ENCODE measurements at regions of chr12 and their contacts with region 1.

Region 1: GRCh38 chr12:116599285-116600136 is 40.3 kb downstream of the MAP1LC3B2 start:
- DNase-seq: peak; percentile 24 to 92
- H3K4me3 ChIP-seq: peak overlapping the region; percentile 43 to 59
- H3K27ac ChIP-seq: peak overlapping the region; percentile 73 to 79
- H3K4me1 ChIP-seq: peaks cover 4 to 22% of the 10 kb centered on the region in 2 donors
- H3K27me3 ChIP-seq: no peaks in the 10 kb centered on the region
- CTCF ChIP-seq: peak; percentile 22 to 86 (median 74)

Region 2: GRCh38 chr12:116015525-116015924 is 584.0 kb before region 1 on chr12:
- intact Hi-C with region 1: loop called (anchors 5 kb)
- DNase-seq: no peak
- H3K4me3 ChIP-seq: no peak overlapping the region
- H3K27ac ChIP-seq: no peak overlapping the region
- H3K4me1 ChIP-seq: peaks cover 0 to 3% of the 10 kb centered on the region in 2 donors
- H3K27me3 ChIP-seq: no peaks in the 10 kb centered on the region
- CTCF ChIP-seq: peak; percentile 42 to 65 (median 45)

Region 3: DNA sequence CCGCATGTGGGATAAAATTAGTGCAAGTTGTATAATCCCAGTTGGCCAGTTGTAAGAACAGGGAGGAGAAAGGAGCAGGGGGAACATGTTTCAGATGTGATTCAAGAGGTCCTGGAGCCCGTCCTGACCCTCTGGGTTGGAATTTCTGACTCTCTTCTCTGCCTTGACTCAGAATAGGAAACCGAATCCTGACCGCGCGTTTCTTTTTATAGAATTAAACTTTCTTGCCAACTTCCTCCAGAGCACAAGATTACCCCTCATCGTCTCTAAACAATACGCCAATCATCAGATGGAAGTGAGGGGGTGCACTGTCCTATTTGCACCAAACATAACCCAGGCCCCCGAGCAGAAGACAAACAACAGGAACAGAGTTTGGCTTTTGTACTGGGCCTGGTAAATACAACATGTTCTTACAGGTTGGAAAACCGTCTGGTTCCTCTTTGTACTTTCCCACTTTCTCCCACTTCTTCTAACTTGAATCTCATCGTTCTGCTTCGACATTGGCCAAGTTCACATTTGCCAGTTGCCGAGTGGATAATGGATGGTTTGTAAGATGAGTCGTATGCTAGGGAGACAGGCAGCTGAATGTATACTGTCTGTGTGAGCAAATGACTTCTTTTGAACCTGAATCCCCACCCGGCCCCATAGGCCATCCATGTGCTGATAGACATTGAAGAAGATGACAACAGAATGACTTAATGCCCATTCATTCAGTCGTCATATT is 279.5 kb before region 1 on chr12:
- intact Hi-C with region 1: loop called (anchors 2 kb)
- DNase-seq: peak; percentile 53 to 95
- H3K4me3 ChIP-seq: peak overlapping the region; percentile 17 to 24
- H3K27ac ChIP-seq: peak overlapping the region; percentile 87 to 89
- H3K4me1 ChIP-seq: peaks cover 11 to 25% of the 10 kb centered on the region in 2 donors
- H3K27me3 ChIP-seq: no peaks in the 10 kb centered on the region
- CTCF ChIP-seq: no peak

Region 4: DNA sequence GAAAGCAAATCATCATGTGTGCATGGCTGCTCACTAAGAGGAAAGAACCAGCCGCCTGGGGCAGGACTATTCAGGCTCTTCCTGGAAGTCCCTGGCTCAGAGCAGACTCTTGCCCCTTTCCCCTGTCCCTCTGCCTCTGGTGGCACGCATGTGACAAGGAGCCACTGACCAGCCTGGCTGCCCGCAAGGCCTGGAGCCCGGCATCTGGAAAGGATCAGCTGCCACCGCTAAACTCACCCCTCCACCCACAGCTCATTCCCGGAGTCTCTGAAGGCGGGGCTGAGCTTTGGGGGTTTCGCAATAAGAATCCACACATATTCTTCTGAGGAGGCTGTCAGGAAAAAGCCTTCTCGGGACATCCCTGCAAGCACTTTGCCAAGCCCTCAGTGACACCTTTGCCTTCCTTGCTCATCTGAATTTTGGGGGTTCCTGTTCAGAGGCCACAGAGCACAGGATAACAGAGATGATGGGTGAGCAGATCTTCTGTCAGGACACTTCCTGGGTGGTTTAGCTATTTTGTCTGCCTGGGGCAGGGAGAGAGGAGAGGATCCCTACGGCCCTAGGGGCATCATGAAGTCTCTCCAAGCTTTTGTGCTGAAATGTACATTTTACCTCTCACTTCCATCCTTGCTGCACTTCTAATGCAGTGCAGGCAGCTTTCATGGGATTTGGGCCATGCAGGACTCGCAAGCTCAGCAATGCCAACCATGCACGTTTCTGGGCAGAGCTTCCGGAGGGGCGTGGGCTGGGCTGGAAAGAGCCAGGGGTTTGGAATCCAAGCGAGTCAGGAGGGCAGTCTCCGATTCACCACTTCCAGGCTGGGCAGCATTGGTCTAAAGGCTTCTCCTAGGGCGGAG is 165.1 kb before region 1 on chr12:
- intact Hi-C with region 1: loop called (anchors 5 kb)
- DNase-seq: peak; percentile 83 to 97
- H3K4me3 ChIP-seq: peak overlapping the region; percentile 24 to 56
- H3K27ac ChIP-seq: peak overlapping the region; percentile 67 to 74
- H3K4me1 ChIP-seq: peaks cover 4 to 12% of the 10 kb centered on the region in 2 donors
- H3K27me3 ChIP-seq: no peaks in the 10 kb centered on the region
- CTCF ChIP-seq: no peak

Region 5: GRCh38 chr12:116474331-116474730 is 125.2 kb before region 1 on chr12:
- intact Hi-C with region 1: no loop called
- DNase-seq: no peak
- H3K4me3 ChIP-seq: no peak overlapping the region
- H3K27ac ChIP-seq: no peak overlapping the region
- H3K4me1 ChIP-seq: no peaks in the 10 kb centered on the region
- H3K27me3 ChIP-seq: no peaks in the 10 kb centered on the region
- CTCF ChIP-seq: no peak

Region 6: GRCh38 chr12:116533343-116534251 is 65.9 kb before region 1 on chr12:
- intact Hi-C with region 1: loop called (anchors 2 kb)
- DNase-seq: peak; percentile 30 to 85
- H3K4me3 ChIP-seq: peak overlapping the region; percentile 61 to 84
- H3K27ac ChIP-seq: peak overlapping the region; percentile 62 to 67
- H3K4me1 ChIP-seq: peaks cover 3 to 16% of the 10 kb centered on the region in 2 donors
- H3K27me3 ChIP-seq: no peaks in the 10 kb centered on the region
- CTCF ChIP-seq: no peak

Region 7: GRCh38 chr12:116635487-116635886 is 36.0 kb after region 1 on chr12:
- intact Hi-C with region 1: no loop called
- DNase-seq: no peak
- H3K4me3 ChIP-seq: no peak overlapping the region
- H3K27ac ChIP-seq: no peak overlapping the region
- H3K4me1 ChIP-seq: no peaks in the 10 kb centered on the region
- H3K27me3 ChIP-seq: no peaks in the 10 kb centered on the region
- CTCF ChIP-seq: no peak